ENCODE measurements at regions of chr9 and their contacts with region 1.

Region 1: GRCh38 chr9:133485361-133486260 is 6.7 kb upstream of the SLC2A6 start:
- DNase-seq: peak in 1 of 5 donors; percentile 47
- H3K4me3 ChIP-seq: peak overlapping the region; percentile 43
- H3K4me3 Mint-ChIP-seq: peak overlapping the region in 3 of 7 donors; percentile 8 to 35 (median 22)
- H3K27ac ChIP-seq: no peak overlapping the region
- H3K27ac Mint-ChIP-seq: peak overlapping the region in 1 of 8 donors; percentile 65
- H3K4me1 ChIP-seq: peaks cover 6% of the 10 kb centered on the region
- H3K4me1 Mint-ChIP-seq: peaks cover 0 to 6% (median 5%) of the 10 kb centered on the region in 3 donors
- H3K27me3 ChIP-seq: no peaks in the 10 kb centered on the region
- H3K27me3 Mint-ChIP-seq: peaks cover 4 to 17% of the 10 kb centered on the region in 2 donors

Region 2: GRCh38 chr9:133184962-133185361 is 300.6 kb before region 1 on chr9:
- CTCF ChIA-PET with region 1: interaction called, 56 read pairs
- POLR2A ChIA-PET with region 1: no interaction called
- DNase-seq: peak in 4 of 5 donors; percentile 13 to 55 (median 32)
- H3K4me3 ChIP-seq: no peak overlapping the region
- H3K4me3 Mint-ChIP-seq: peak overlapping the region in 1 of 7 donors; percentile 46
- H3K27ac ChIP-seq: no peak overlapping the region
- H3K27ac Mint-ChIP-seq: peak overlapping the region in 1 of 8 donors; percentile 9
- H3K4me1 ChIP-seq: peaks cover 10% of the 10 kb centered on the region
- H3K4me1 Mint-ChIP-seq: peaks cover 12 to 14% (median 13%) of the 10 kb centered on the region in 3 donors
- H3K27me3 ChIP-seq: peaks cover 19% of the 10 kb centered on the region
- H3K27me3 Mint-ChIP-seq: peaks cover 22 to 46% of the 10 kb centered on the region in 2 donors

Region 3: GRCh38 chr9:133406480-133407307 is 78.9 kb before region 1 on chr9:
- CTCF ChIA-PET with region 1: interaction called, 17 read pairs
- POLR2A ChIA-PET with region 1: interaction called, 5 read pairs
- DNase-seq: peak; percentile 70 to 85 (median 71)
- H3K4me3 ChIP-seq: no peak overlapping the region
- H3K4me3 Mint-ChIP-seq: no peak overlapping the region
- H3K27ac ChIP-seq: no peak overlapping the region
- H3K27ac Mint-ChIP-seq: peak overlapping the region; percentile 64 to 94 (median 87)
- H3K4me1 ChIP-seq: no peaks in the 10 kb centered on the region
- H3K4me1 Mint-ChIP-seq: peaks cover 6 to 8% (median 7%) of the 10 kb centered on the region in 3 donors
- H3K27me3 ChIP-seq: no peaks in the 10 kb centered on the region
- H3K27me3 Mint-ChIP-seq: no peaks in the 10 kb centered on the region